ENCODE measurements at regions of chr2 and their contacts with region 1.

Region 1: GRCh38 chr2:68379184-68379708 is 14.2 kb downstream of the PLEK start:
- DNase-seq: no peak
- H3K4me3 Mint-ChIP-seq: no peak overlapping the region
- H3K27ac Mint-ChIP-seq: peak overlapping the region; percentile 75
- H3K4me1 Mint-ChIP-seq: peaks cover 25% of the 10 kb centered on the region
- H3K27me3 Mint-ChIP-seq: peaks cover 35% of the 10 kb centered on the region

Region 2: GRCh38 chr2:68362069-68362468 is 17.2 kb before region 1 on chr2:
- intact Hi-C with region 1: loop called (anchors 2 kb)
- DNase-seq: peak; percentile 66
- H3K4me3 Mint-ChIP-seq: no peak overlapping the region
- H3K27ac Mint-ChIP-seq: no peak overlapping the region
- H3K4me1 Mint-ChIP-seq: peaks cover 11% of the 10 kb centered on the region
- H3K27me3 Mint-ChIP-seq: peaks cover 16% of the 10 kb centered on the region